Activated CD4-positive, alpha-beta memory T cell treated with anti-CD3 and anti-CD28 coated beads for 36 hours (primary cell): ENCODE measurements at regions of chr13 and their contacts with region 1.

Region 1: GRCh38 chr13:99087096-99087953 is 109.5 kb upstream of the DOCK9 start:
- DNase-seq: peak; percentile 95
- H3K4me3 Mint-ChIP-seq: peak overlapping the region; percentile 99
- H3K27ac Mint-ChIP-seq: peak overlapping the region; percentile 97
- H3K4me1 Mint-ChIP-seq: peaks cover 32% of the 10 kb centered on the region
- H3K27me3 Mint-ChIP-seq: no peaks in the 10 kb centered on the region

Region 2: DNA sequence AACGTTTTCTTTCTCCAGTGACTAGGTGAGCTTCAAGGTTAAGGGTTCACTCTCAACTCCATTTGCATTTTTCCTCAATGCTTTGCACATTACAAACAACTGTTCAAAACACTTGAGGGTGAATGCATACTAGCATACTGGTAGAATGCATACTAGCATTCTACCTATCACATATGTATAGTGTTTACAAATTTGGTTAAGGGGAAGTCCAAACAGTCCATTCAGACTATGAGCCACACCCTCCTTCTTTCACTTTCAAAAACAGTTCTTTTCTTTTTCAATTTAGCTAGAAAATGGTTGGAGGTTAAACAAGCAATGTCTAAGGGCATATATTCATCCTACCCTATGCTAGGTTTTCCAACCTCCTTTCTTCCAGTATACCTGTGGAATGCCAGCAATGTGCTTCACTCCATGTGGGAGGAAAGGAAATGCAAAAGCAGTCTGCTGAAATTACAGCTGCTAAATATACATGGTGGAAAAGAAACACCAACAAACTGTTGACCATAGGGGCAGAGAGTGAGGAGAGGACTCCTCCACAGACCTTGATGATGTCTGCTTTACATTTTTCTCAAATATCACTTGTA is 212.1 kb before region 1 on chr13:
- CTCF ChIA-PET with region 1: no interaction called
- POLR2A ChIA-PET with region 1: no interaction called
- intact Hi-C with region 1: no loop called
- DNase-seq: no peak
- H3K4me3 Mint-ChIP-seq: no peak overlapping the region
- H3K27ac Mint-ChIP-seq: peak overlapping the region; percentile 20
- H3K4me1 Mint-ChIP-seq: peaks cover 22% of the 10 kb centered on the region
- H3K27me3 Mint-ChIP-seq: no peaks in the 10 kb centered on the region

Region 3: GRCh38 chr13:98998831-98999638 is 88.3 kb before region 1 on chr13:
- CTCF ChIA-PET with region 1: no interaction called
- POLR2A ChIA-PET with region 1: no interaction called
- intact Hi-C with region 1: loop called (anchors 5 kb)
- DNase-seq: peak; percentile 56
- H3K4me3 Mint-ChIP-seq: peak overlapping the region; percentile 31
- H3K27ac Mint-ChIP-seq: peak overlapping the region; percentile 76
- H3K4me1 Mint-ChIP-seq: peaks cover 90% of the 10 kb centered on the region
- H3K27me3 Mint-ChIP-seq: no peaks in the 10 kb centered on the region

Region 4: GRCh38 chr13:99051768-99052455 is 35.4 kb before region 1 on chr13:
- CTCF ChIA-PET with region 1: interaction called, 4 read pairs
- POLR2A ChIA-PET with region 1: interaction called, 6 read pairs
- intact Hi-C with region 1: loop called (anchors 1 kb)
- DNase-seq: no peak
- H3K4me3 Mint-ChIP-seq: peak overlapping the region; percentile 31
- H3K27ac Mint-ChIP-seq: peak overlapping the region; percentile 76
- H3K4me1 Mint-ChIP-seq: peaks cover 83% of the 10 kb centered on the region
- H3K27me3 Mint-ChIP-seq: no peaks in the 10 kb centered on the region

Region 5: DNA sequence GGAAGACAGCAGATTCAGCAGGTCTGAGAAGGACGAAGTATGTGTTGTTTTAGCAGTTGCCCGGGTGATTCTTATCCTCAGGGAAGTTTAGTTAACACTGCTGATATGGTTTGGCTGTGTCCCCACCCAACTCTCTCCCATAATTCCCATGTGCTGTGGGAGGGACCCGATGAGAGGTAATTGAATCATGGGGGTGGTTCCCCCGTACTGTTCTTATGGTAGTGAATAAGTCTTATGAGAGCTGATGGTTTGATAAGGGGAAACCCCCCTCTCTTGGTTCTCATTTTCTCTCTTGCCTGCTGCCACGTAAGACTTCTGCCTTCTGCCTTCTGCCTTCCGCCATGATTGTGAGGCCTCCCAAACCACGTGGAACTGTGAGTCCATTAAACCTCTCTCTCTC is 32.4 kb after region 1 on chr13:
- CTCF ChIA-PET with region 1: interaction called, 3 read pairs
- POLR2A ChIA-PET with region 1: interaction called, 3 read pairs
- intact Hi-C with region 1: loop called (anchors 1 kb)
- DNase-seq: peak; percentile 66
- H3K4me3 Mint-ChIP-seq: peak overlapping the region; percentile 26
- H3K27ac Mint-ChIP-seq: peak overlapping the region; percentile 28
- H3K4me1 Mint-ChIP-seq: peaks cover 41% of the 10 kb centered on the region
- H3K27me3 Mint-ChIP-seq: peaks cover 2% of the 10 kb centered on the region